K562 (cell line): ENCODE measurements at regions of chr11 and their contacts with region 1.

Region 1: GRCh38 chr11:20387241-20388095 is at the start of gene PRMT3:
- DNase-seq: peak; percentile 93 to 96 (median 94)
- ATAC-seq: peak; percentile 89
- H3K4me3 ChIP-seq: peak within 1 kb of the TSS; percentile 91
- H3K27ac ChIP-seq: peak within 1 kb of the TSS; percentile 96
- H3K4me1 ChIP-seq: peaks cover 0 to 10% of the 10 kb centered on the region in 2 experiments; a peak in 2 of 5 replicates
- H3K27me3 ChIP-seq: no peaks in the 10 kb centered on the region
- CTCF ChIP-seq: peak; percentile 83 to 97 (median 85)
- EP300 ChIP-seq: peak; percentile 16; the same call in 1 of the 2 replicates
- POLR2A ChIP-seq: peak; percentile 87
- RAD21 ChIP-seq: peak; percentile 72 to 77
- polyA plus RNA-seq, gene PRMT3: 24.0 to 35.3 TPM

Region 2: GRCh38 chr11:20278727-20279126 is 108.7 kb before region 1 on chr11:
- CTCF ChIA-PET with region 1: no interaction called
- POLR2A ChIA-PET with region 1: no interaction called
- in situ Hi-C with region 1: no loop called
- intact Hi-C with region 1: no loop called
- DNase-seq: no peak
- ATAC-seq: no peak
- H3K4me3 ChIP-seq: no peak overlapping the region
- H3K27ac ChIP-seq: no peak overlapping the region
- H3K4me1 ChIP-seq: no peaks in the 10 kb centered on the region
- H3K27me3 ChIP-seq: peaks cover 18 to 27% of the 10 kb centered on the region in 2 experiments
- CTCF ChIP-seq: no peak
- EP300 ChIP-seq: no peak
- POLR2A ChIP-seq: no peak
- RAD21 ChIP-seq: no peak

Region 3: DNA sequence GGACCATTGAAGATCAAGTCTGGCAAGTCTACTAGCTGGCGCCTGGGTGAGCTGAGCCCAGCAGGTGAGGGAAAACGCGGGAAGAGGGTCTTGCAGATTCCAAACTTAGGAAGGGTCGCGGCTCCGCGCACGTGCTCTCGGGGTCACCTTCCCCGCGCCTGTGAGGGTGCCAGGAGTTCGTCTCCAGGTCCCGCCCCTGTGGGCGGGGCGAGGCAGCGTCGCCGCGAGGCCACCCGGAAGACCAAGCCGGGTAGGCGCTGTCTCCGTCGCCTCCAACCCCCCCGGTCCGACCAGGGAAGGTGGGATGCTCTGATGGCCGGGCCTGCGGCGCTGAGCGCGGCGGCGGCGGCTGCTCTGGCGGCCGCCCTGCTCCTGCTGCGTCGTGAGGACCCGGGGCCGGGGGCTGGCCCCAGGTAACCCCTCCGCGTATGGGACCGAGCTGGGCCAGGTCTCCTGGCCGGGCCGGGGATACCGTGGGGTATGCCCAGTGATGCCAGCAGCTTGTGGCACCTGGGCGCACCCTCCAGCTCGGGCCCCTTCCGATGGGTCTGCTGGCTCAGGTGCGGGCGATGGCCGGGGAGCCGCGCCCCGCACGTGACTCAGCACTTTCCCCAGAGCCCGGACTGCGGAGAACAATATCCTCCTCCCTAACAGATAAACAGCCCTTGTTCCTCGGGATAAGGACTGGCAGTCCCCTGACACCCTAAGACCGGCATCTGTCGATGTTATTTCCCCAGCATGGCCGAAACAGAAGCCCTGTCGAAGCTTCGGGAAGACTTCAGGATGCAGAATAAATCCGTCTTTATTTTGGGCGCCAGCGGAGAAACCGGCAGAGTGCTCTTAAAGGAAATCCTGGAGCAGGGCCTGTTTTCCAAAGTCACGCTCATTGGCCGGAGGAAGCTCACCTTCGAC is 23.7 kb before region 1 on chr11 and contains the start of gene HTATIP2:
- CTCF ChIA-PET with region 1: no interaction called
- POLR2A ChIA-PET with region 1: no interaction called
- in situ Hi-C with region 1: no loop called
- intact Hi-C with region 1: loop called (anchors 2 kb)
- DNase-seq: peak; percentile 88 to 91 (median 88)
- ATAC-seq: peak; percentile 89
- H3K4me3 ChIP-seq: peak within 1 kb of the TSS; percentile 67
- H3K27ac ChIP-seq: peak within 1 kb of the TSS; percentile 91
- H3K4me1 ChIP-seq: peaks cover 17 to 58% of the 10 kb centered on the region in 2 experiments
- H3K27me3 ChIP-seq: no peaks in the 10 kb centered on the region
- CTCF ChIP-seq: no peak
- EP300 ChIP-seq: peak; percentile 60
- POLR2A ChIP-seq: peak; percentile 80
- RAD21 ChIP-seq: no peak
- polyA plus RNA-seq, gene HTATIP2: 89.7 to 90.9 TPM

Region 4: GRCh38 chr11:20443596-20443995 is 56.1 kb after region 1 on chr11:
- CTCF ChIA-PET with region 1: interaction called, 8 read pairs
- POLR2A ChIA-PET with region 1: no interaction called
- in situ Hi-C with region 1: no loop called
- intact Hi-C with region 1: loop called (anchors 5 kb)
- DNase-seq: peak in 2 of 4 experiments; percentile 24 to 43
- ATAC-seq: peak; percentile 86
- H3K4me3 ChIP-seq: no peak overlapping the region
- H3K27ac ChIP-seq: no peak overlapping the region
- H3K4me1 ChIP-seq: no peaks in the 10 kb centered on the region
- H3K27me3 ChIP-seq: no peaks in the 10 kb centered on the region
- CTCF ChIP-seq: peak; percentile 23 to 57 (median 42); a peak in 5 of 6 replicates
- EP300 ChIP-seq: no peak
- POLR2A ChIP-seq: no peak
- RAD21 ChIP-seq: peak; percentile 31 to 48

Region 5: GRCh38 chr11:20599221-20600019 is 212.0 kb after region 1 on chr11 and contains the start of gene SLC6A5:
- CTCF ChIA-PET with region 1: no interaction called
- POLR2A ChIA-PET with region 1: no interaction called
- in situ Hi-C with region 1: loop called (anchors 10 kb)
- intact Hi-C with region 1: loop called (anchors 5 kb)
- DNase-seq: peak; percentile 50 to 73 (median 62)
- ATAC-seq: peak; percentile 90
- H3K4me3 ChIP-seq: no peak within 1 kb of the TSS
- H3K27ac ChIP-seq: no peak within 1 kb of the TSS
- H3K4me1 ChIP-seq: peaks cover 3 to 31% of the 10 kb centered on the region in 2 experiments; a peak in 3 of 5 replicates
- H3K27me3 ChIP-seq: peaks cover 48 to 80% of the 10 kb centered on the region in 2 experiments
- CTCF ChIP-seq: no peak
- EP300 ChIP-seq: no peak
- POLR2A ChIP-seq: no peak
- RAD21 ChIP-seq: no peak
- polyA plus RNA-seq, gene SLC6A5: not detected